Activated CD4-positive, alpha-beta T cell treated with anti-CD3 and anti-CD28 coated beads for 36 hours (primary cell): ENCODE measurements at regions of chr1 and their contacts with region 1.

Region 1: GRCh38 chr1:160519642-160520435 is 3.2 kb downstream of the SLAMF6 start:
- DNase-seq: peak; percentile 54
- ATAC-seq: peak; percentile 70
- H3K4me3 Mint-ChIP-seq: peak overlapping the region; percentile 97
- H3K27ac Mint-ChIP-seq: peak overlapping the region; percentile 98
- H3K4me1 Mint-ChIP-seq: peaks cover 83% of the 10 kb centered on the region
- H3K27me3 Mint-ChIP-seq: no peaks in the 10 kb centered on the region

Region 2: GRCh38 chr1:160428655-160429054 is 91.2 kb before region 1 on chr1:
- CTCF ChIA-PET with region 1: no interaction called
- POLR2A ChIA-PET with region 1: no interaction called
- intact Hi-C with region 1: loop called (anchors 1 kb)
- DNase-seq: peak; percentile 60
- ATAC-seq: peak; percentile 51
- H3K4me3 Mint-ChIP-seq: peak overlapping the region; percentile 32
- H3K27ac Mint-ChIP-seq: peak overlapping the region; percentile 94
- H3K4me1 Mint-ChIP-seq: peaks cover 63% of the 10 kb centered on the region
- H3K27me3 Mint-ChIP-seq: no peaks in the 10 kb centered on the region

Region 3: DNA sequence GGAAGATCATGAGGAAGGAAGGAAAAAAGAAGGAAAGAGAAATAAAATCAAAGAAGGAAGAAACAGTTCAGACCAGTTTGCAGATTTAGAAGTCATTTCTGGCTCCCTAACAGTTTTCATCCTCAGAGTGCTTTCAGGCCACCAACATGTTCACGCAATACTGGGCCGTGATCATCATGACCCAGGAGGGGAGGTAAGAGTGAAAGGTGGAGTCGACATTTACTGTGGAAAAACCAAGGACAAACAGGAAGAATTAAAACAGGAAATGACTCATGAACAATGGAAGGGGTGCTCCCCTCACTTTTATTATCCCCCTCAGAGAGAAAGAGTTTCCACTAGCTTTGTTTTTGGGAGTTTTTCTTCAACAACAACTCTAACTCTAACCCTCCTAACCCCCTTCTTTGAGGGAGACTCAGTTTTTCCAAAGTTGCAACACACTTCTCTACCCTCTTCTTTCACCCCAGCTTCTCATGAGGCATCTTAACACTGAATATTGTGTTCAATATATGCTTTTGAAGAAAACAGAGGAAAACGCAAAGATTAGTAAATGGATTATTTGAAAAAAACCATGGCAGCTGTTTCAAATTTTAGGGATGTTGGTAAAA is 59.1 kb before region 1 on chr1:
- CTCF ChIA-PET with region 1: interaction called, 3 read pairs
- POLR2A ChIA-PET with region 1: interaction called, 3 read pairs
- intact Hi-C with region 1: loop called (anchors 1 to 2 kb)
- DNase-seq: peak; percentile 60
- ATAC-seq: peak; percentile 60
- H3K4me3 Mint-ChIP-seq: peak overlapping the region; percentile 57
- H3K27ac Mint-ChIP-seq: peak overlapping the region; percentile 98
- H3K4me1 Mint-ChIP-seq: peaks cover 85% of the 10 kb centered on the region
- H3K27me3 Mint-ChIP-seq: no peaks in the 10 kb centered on the region

Region 4: DNA sequence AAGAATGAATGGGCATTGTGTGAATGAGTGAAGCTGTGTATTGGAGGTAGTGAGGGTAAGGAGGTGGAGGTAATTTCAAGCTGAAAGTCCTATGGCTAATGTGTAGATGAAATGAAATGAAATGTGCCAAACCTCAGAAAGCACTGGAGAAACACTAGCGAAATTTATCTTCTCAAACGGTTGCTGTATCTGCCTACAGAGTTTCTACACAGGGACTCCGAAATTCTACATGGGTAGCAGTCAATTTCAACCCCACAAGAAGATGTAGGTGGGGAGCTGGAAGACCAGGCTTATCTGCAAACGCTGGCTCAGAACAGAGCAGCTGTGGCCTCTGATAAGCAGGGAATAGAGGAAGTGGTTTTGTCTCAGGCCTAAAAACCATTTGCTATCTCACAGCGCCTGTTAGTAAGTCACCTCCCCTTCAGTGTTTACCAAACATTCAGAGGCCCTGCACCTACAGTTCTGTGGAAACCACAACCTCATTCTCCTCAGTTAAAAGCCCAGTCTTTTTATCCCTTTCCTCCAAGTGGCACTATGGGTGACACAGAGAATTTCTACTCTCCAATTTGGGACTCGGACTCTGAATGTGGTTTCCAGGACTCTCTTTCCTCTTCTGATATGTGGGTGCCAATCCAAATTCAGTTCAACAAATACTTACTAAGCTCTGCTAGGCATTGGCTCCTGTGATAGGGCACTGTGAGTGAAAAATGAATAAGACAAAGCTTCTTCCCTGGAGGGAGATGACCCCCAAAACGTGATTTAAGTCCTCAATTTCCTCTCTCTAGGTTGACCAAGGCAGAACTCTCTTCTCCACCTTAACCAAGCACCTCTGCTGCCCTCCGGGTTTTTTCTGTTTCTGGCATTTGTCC is 20.4 kb after region 1 on chr1:
- CTCF ChIA-PET with region 1: interaction called, 10 read pairs
- POLR2A ChIA-PET with region 1: no interaction called
- intact Hi-C with region 1: loop called in 1 of 2 experiments (anchors 2 kb)
- DNase-seq: peak; percentile 62
- ATAC-seq: peak; percentile 88
- H3K4me3 Mint-ChIP-seq: peak overlapping the region; percentile 47
- H3K27ac Mint-ChIP-seq: peak overlapping the region; percentile 92
- H3K4me1 Mint-ChIP-seq: peaks cover 63% of the 10 kb centered on the region
- H3K27me3 Mint-ChIP-seq: no peaks in the 10 kb centered on the region

Region 5: GRCh38 chr1:160575112-160575664 is 55.3 kb after region 1 on chr1:
- CTCF ChIA-PET with region 1: interaction called, 4 read pairs
- POLR2A ChIA-PET with region 1: interaction called, 3 read pairs
- intact Hi-C with region 1: loop called (anchors 1 to 5 kb)
- DNase-seq: peak; percentile 28
- ATAC-seq: peak; percentile 50
- H3K4me3 Mint-ChIP-seq: peak overlapping the region; percentile 77
- H3K27ac Mint-ChIP-seq: peak overlapping the region; percentile 96
- H3K4me1 Mint-ChIP-seq: peaks cover 89% of the 10 kb centered on the region
- H3K27me3 Mint-ChIP-seq: no peaks in the 10 kb centered on the region